ENCODE measurements at regions of chr9 and their contacts with region 1.

Region 1: GRCh38 chr9:19048966-19049916 is at the start of gene RRAGA:
- DNase-seq: peak; percentile 97
- H3K4me3 ChIP-seq: peak within 1 kb of the TSS; percentile 48 to 76 (median 53)
- H3K27ac ChIP-seq: peak within 1 kb of the TSS; percentile 69
- H3K4me1 ChIP-seq: peaks cover 16% of the 10 kb centered on the region
- H3K27me3 ChIP-seq: no peaks in the 10 kb centered on the region
- CTCF ChIP-seq: peak; percentile 81 to 91
- POLR2A ChIP-seq: peak; percentile 97
- total RNA-seq, gene RRAGA: 78.5 and 81.2 TPM in 2 replicates

Region 2: GRCh38 chr9:19116107-19116790 is 67.0 kb after region 1 on chr9:
- CTCF ChIA-PET with region 1: interaction called, 5 read pairs
- POLR2A ChIA-PET with region 1: interaction called, 5 read pairs
- dilution Hi-C with region 1: no loop called
- intact Hi-C with region 1: loop called (anchors 1 kb)
- DNase-seq: no peak
- H3K4me3 ChIP-seq: no peak overlapping the region
- H3K27ac ChIP-seq: no peak overlapping the region
- H3K4me1 ChIP-seq: peaks cover 30% of the 10 kb centered on the region
- H3K27me3 ChIP-seq: no peaks in the 10 kb centered on the region
- CTCF ChIP-seq: no peak
- POLR2A ChIP-seq: no peak

Region 3: GRCh38 chr9:19379697-19380046 is 330.4 kb after region 1 on chr9:
- CTCF ChIA-PET with region 1: no interaction called
- POLR2A ChIA-PET with region 1: no interaction called
- dilution Hi-C with region 1: no loop called
- intact Hi-C with region 1: loop called (anchors 1 kb)
- DNase-seq: peak; percentile 69
- H3K4me3 ChIP-seq: peak overlapping the region; percentile 84 to 94 (median 93)
- H3K27ac ChIP-seq: peak overlapping the region; percentile 62
- H3K4me1 ChIP-seq: peaks cover 37% of the 10 kb centered on the region
- H3K27me3 ChIP-seq: no peaks in the 10 kb centered on the region
- CTCF ChIP-seq: no peak
- POLR2A ChIP-seq: no peak

Region 4: DNA sequence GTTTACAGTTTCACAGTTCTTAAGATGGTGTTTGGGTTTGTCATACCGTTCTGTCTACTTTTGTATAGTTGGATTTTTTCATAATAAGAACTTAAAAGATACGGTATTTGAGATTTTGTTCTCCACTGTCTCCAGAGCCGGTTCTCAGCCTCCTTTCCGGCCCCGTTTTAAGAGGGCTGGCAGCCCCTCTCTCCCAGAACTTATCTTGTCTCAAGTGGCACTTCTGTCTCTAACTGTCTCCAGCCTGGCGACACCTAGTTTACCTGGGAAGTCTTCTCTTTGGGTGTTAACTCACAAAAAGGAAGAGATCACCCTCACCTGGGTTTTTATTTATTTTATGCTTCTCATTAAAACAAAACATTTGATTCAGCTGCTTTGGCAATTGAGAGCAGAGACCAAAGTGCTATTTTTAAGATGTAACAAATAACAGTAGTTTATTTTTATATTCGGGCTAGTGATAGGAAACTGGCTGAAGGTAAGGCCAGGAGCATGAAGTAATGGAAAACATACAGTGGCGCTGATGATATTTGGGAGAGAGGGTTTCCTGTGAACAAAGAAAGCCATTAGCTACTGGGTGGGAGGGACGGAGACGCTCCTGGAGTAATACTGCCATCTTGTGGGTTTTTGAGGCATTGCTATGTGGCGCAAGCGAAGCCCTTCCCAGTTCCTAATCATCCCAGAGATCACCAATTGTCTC is 407.9 kb after region 1 on chr9:
- CTCF ChIA-PET with region 1: interaction called, 51 read pairs
- POLR2A ChIA-PET with region 1: interaction called, 3 read pairs
- dilution Hi-C with region 1: no loop called
- intact Hi-C with region 1: loop called (anchors 1 kb)
- DNase-seq: peak; percentile 80
- H3K4me3 ChIP-seq: no peak overlapping the region
- H3K27ac ChIP-seq: no peak overlapping the region
- H3K4me1 ChIP-seq: peaks cover 6% of the 10 kb centered on the region
- H3K27me3 ChIP-seq: no peaks in the 10 kb centered on the region
- CTCF ChIP-seq: peak; percentile 88 to 93
- POLR2A ChIP-seq: no peak